ENCODE measurements at regions of chr16 and their contacts with region 1.

Region 1: DNA sequence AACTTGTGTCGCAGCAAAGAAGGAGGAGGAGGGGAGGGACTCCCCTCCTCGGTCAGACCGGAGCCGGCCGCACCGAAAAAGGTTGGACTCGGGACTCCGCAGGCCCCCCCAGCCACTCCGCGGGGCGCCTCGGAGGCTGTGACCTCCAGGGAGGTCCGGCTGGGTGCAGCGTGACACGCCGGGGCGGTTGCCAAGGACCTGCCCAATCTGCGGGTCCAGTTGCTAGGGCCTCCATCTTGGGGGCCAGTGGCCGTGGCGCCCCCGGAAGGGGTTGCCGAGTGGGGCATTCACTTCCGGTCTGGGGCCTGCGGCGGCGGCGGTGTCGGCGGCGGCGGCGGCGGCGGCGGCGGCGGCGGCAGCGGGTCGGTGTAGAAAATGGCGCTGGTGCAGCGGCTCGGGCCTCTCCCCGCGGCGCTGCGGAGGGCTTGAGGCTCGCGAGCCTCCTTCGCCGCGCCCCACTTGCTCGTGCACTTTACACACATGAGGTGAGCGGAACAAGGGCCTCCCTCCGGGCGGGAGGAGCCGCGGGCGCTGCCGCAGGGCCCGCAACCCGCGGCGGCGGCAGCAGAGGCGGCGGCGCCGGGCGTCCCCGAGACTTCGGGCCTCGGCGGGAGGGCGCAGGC is at the start of gene TNRC6A:
- DNase-seq: peak; percentile 68 to 86 (median 78)
- ATAC-seq: peak; percentile 88
- H3K4me3 ChIP-seq: peak within 1 kb of the TSS; percentile 90
- H3K4me3 Mint-ChIP-seq: peak within 1 kb of the TSS; percentile 89 to 100 (median 96)
- H3K27ac ChIP-seq: peak within 1 kb of the TSS; percentile 98
- H3K27ac Mint-ChIP-seq: peak within 1 kb of the TSS; percentile 93 to 100 (median 98)
- H3K4me1 ChIP-seq: peaks cover 17 to 20% of the 10 kb centered on the region in 2 donors
- H3K4me1 Mint-ChIP-seq: peaks cover 30 to 55% (median 45%) of the 10 kb centered on the region in 7 donors
- H3K27me3 ChIP-seq: no peaks in the 10 kb centered on the region
- H3K27me3 Mint-ChIP-seq: peaks cover 0 to 6% (median 0%) of the 10 kb centered on the region in 5 donors
- total RNA-seq, gene TNRC6A: 46.9 to 110 (median 77.8) TPM

Region 2: GRCh38 chr16:24589997-24590396 is 139.5 kb before region 1 on chr16:
- CTCF ChIA-PET with region 1: no interaction called
- POLR2A ChIA-PET with region 1: no interaction called
- intact Hi-C with region 1: no loop called
- DNase-seq: no peak
- ATAC-seq: no peak
- H3K4me3 ChIP-seq: no peak overlapping the region
- H3K4me3 Mint-ChIP-seq: no peak overlapping the region
- H3K27ac ChIP-seq: no peak overlapping the region
- H3K27ac Mint-ChIP-seq: no peak overlapping the region
- H3K4me1 ChIP-seq: no peaks in the 10 kb centered on the region
- H3K4me1 Mint-ChIP-seq: peaks cover 0 to 6% (median 0%) of the 10 kb centered on the region in 7 donors
- H3K27me3 ChIP-seq: no peaks in the 10 kb centered on the region
- H3K27me3 Mint-ChIP-seq: peaks cover 5 to 15% (median 14%) of the 10 kb centered on the region in 5 donors

Region 3: DNA sequence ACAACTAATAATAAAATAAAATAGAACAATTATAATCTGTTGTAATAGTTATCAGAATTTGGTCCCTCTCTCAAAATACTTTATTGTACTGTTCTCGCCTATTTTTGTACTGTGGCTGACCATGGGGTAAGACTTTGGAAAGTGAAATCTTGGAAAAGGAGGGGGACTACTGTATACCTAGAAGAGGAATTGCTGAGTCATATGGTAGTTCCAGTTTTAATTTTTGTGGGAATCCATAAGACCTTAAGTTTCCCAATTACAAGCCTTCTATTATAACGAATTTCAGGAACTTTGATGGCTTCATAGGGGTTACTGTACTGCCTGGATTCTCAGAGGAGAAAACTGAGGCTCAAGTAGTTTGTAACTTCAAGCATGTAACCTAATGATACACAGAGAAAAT is 35.4 kb after region 1 on chr16:
- CTCF ChIA-PET with region 1: no interaction called
- POLR2A ChIA-PET with region 1: interaction called, 4 read pairs
- intact Hi-C with region 1: loop called in 1 of 2 experiments (anchors 2 kb)
- DNase-seq: no peak
- ATAC-seq: no peak
- H3K4me3 ChIP-seq: no peak overlapping the region
- H3K4me3 Mint-ChIP-seq: no peak overlapping the region
- H3K27ac ChIP-seq: no peak overlapping the region
- H3K27ac Mint-ChIP-seq: no peak overlapping the region
- H3K4me1 ChIP-seq: no peaks in the 10 kb centered on the region
- H3K4me1 Mint-ChIP-seq: peaks cover 9 to 23% (median 17%) of the 10 kb centered on the region in 7 donors
- H3K27me3 ChIP-seq: no peaks in the 10 kb centered on the region
- H3K27me3 Mint-ChIP-seq: no peaks in the 10 kb centered on the region

Region 4: DNA sequence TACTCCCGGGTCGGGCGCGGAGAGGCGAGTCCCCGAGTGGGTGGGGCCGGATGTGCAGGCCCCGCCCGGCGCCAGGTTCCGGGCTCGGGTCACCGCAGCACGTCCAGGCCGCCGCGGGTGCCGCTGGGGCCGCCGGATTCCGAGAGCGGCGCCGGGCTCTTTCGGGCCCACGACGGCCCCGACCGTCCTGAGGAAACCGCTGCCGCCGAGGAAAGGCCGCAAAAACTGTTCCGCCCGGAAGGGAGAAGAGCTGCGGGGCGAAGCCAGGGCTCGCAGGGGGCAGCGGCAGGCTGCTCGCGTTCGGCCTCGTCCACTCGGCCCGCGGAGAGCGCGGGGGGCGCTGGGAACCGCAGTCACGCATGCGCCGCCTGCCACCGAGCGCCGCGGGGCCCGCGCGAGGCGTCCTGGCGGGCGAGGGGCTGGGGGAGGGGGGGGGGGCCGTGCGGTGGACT is 528.1 kb after region 1 on chr16 and contains the start of gene ZKSCAN2:
- CTCF ChIA-PET with region 1: no interaction called
- POLR2A ChIA-PET with region 1: no interaction called
- intact Hi-C with region 1: loop called (anchors 5 kb)
- DNase-seq: peak; percentile 66 to 90 (median 76)
- ATAC-seq: peak; percentile 89
- H3K4me3 ChIP-seq: peak within 1 kb of the TSS; percentile 90
- H3K4me3 Mint-ChIP-seq: peak within 1 kb of the TSS; percentile 90 to 98 (median 96)
- H3K27ac ChIP-seq: peak within 1 kb of the TSS; percentile 93
- H3K27ac Mint-ChIP-seq: peak within 1 kb of the TSS; percentile 95 to 98 (median 96)
- H3K4me1 ChIP-seq: peaks cover 16 to 39% of the 10 kb centered on the region in 2 donors
- H3K4me1 Mint-ChIP-seq: peaks cover 48 to 74% (median 66%) of the 10 kb centered on the region in 7 donors
- H3K27me3 ChIP-seq: no peaks in the 10 kb centered on the region
- H3K27me3 Mint-ChIP-seq: no peaks in the 10 kb centered on the region
- total RNA-seq, gene ZKSCAN2: 4.7 to 7.0 (median 5.2) TPM

Measured in naive thymus-derived CD4-positive, alpha-beta T cell (primary cell).